ENCODE measurements at regions of chr11 and their contacts with region 1.

Region 1: DNA sequence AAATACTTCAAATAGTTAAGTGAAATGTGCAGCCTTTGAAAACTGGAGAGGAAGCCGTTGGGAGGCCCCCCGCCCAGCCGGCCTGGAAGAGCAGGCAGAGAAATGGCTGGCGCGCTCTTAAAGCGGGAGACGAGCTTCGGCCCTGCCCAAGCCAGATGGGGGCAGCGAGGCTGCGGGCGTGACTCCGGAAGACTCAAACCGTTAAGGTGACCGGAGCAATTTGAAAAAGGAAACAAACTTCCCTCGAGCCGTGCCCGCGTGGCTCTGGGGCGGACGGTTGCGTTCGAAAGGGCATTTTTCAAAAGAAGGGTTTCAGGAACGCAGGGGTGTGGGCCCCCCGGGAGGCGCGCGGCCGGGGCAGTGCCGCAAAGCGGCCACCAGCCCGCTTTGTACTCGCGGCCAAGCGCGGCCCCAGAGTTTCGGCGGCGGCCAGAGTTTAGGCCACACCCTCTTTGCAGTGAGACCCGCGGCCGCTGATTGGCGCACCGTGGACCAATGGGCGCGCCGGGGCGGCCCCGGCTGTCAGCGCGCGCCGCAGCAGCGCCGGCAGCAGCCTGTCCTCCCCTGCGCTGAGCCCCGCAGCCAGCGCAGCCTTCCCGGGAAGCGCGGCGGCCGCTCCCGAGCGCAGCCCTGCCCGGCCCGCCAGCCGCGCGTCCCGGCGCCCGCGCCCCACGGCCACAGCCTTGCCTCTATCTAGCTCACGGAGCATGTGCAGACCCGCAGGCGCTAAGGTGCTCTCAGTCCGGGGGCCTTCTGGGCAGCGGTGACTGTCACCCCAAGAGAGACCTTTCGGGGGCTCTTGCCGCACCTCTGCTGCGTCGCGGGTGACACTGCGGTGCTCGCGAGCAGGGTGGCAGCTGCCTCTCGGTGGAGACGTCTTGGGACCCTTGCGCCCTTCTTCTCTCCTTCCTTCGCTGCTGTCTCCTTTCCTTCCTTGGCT is at the start of gene NAV2:
- DNase-seq: peak; percentile 43 to 88 (median 68)
- ATAC-seq: peak; percentile 97
- H3K4me3 ChIP-seq: peak within 1 kb of the TSS; percentile 67 to 86
- H3K4me3 Mint-ChIP-seq: peak within 1 kb of the TSS; percentile 90
- H3K27ac ChIP-seq: peak within 1 kb of the TSS; percentile 43 to 61
- H3K27ac Mint-ChIP-seq: peak within 1 kb of the TSS; percentile 90
- H3K4me1 ChIP-seq: peaks cover 20% of the 10 kb centered on the region
- H3K4me1 Mint-ChIP-seq: peaks cover 26% of the 10 kb centered on the region
- H3K27me3 ChIP-seq: peaks cover 15 to 19% of the 10 kb centered on the region in 2 experiments
- H3K27me3 Mint-ChIP-seq: peaks cover 33% of the 10 kb centered on the region
- CTCF ChIP-seq: no peak
- total RNA-seq, gene NAV2: 0.39 to 1.3 TPM

Region 2: DNA sequence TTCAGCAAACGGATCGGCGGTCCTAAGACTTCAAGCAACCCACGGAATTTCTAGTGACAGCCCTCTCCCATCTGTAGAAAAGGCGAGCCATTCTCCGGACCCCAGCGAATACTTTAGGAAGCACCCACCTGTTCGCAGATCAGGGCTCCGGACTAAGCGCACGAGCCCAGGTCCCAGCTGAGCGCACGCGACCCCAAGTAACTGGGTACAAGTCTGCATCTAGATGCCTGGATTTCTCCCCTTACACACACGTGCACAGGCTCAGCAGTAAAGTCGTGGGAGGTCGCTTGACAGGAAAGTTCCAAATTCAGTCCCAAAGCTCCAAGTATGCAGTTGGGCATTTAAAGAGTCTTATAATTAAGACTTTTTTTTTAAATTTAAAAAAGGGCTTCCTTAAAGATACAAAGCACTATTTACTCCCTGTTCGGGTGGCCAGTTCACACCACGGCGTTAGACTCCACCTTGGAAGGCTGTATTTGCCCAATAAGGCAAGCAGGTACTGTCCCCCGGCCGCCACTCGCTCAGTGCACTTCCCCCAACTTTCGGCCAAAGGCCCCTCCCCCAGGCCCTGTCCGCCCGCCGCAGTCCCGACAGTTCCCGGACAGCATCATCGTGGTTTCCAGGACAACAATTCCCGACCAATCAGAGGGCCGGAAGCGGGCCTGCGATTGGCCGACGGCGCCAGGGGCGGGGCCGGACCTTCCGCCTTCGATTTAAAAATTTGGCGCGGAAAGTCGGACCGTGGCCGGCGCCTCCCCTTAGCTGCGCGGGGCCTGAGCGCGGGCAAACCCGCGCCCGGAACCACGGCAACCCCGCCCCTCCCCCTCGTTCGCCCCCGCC is 471.9 kb before region 1 on chr11 and contains the start of gene E2F8:
- CTCF ChIA-PET with region 1: no interaction called
- POLR2A ChIA-PET with region 1: no interaction called
- intact Hi-C with region 1: loop called in 1 of 2 experiments (anchors 10 kb)
- DNase-seq: peak; percentile 57 to 86 (median 74)
- ATAC-seq: peak; percentile 77
- H3K4me3 ChIP-seq: peak within 1 kb of the TSS; percentile 67 to 76
- H3K4me3 Mint-ChIP-seq: peak within 1 kb of the TSS; percentile 85
- H3K27ac ChIP-seq: no peak within 1 kb of the TSS
- H3K27ac Mint-ChIP-seq: no peak within 1 kb of the TSS
- H3K4me1 ChIP-seq: peaks cover 20% of the 10 kb centered on the region
- H3K4me1 Mint-ChIP-seq: peaks cover 18% of the 10 kb centered on the region
- H3K27me3 ChIP-seq: peaks cover 21 to 29% of the 10 kb centered on the region in 2 experiments
- H3K27me3 Mint-ChIP-seq: peaks cover 35% of the 10 kb centered on the region
- CTCF ChIP-seq: no peak
- total RNA-seq, gene E2F8: 0.19 TPM in 1 of 2 experiments, not detected in the other

Region 3: GRCh38 chr11:19723572-19724342 is 11.2 kb after region 1 on chr11:
- CTCF ChIA-PET with region 1: no interaction called
- POLR2A ChIA-PET with region 1: interaction called, 12 read pairs
- intact Hi-C with region 1: loop called in 1 of 2 experiments (anchors 1 kb)
- DNase-seq: peak in 8 of 9 experiments; percentile 17 to 81 (median 51)
- ATAC-seq: peak; percentile 87
- H3K4me3 ChIP-seq: no peak overlapping the region
- H3K4me3 Mint-ChIP-seq: peak overlapping the region; percentile 20
- H3K27ac ChIP-seq: peak overlapping the region; percentile 12 to 37
- H3K27ac Mint-ChIP-seq: peak overlapping the region; percentile 82
- H3K4me1 ChIP-seq: peaks cover 25% of the 10 kb centered on the region
- H3K4me1 Mint-ChIP-seq: peaks cover 26% of the 10 kb centered on the region
- H3K27me3 ChIP-seq: no peaks in the 10 kb centered on the region
- H3K27me3 Mint-ChIP-seq: peaks cover under 1% of the 10 kb centered on the region
- CTCF ChIP-seq: no peak

Region 4: GRCh38 chr11:19890308-19890707 is 177.8 kb after region 1 on chr11:
- CTCF ChIA-PET with region 1: no interaction called
- POLR2A ChIA-PET with region 1: no interaction called
- intact Hi-C with region 1: no loop called
- DNase-seq: no peak
- ATAC-seq: no peak
- H3K4me3 ChIP-seq: no peak overlapping the region
- H3K4me3 Mint-ChIP-seq: no peak overlapping the region
- H3K27ac ChIP-seq: no peak overlapping the region
- H3K27ac Mint-ChIP-seq: no peak overlapping the region
- H3K4me1 ChIP-seq: no peaks in the 10 kb centered on the region
- H3K4me1 Mint-ChIP-seq: no peaks in the 10 kb centered on the region
- H3K27me3 ChIP-seq: no peaks in the 10 kb centered on the region
- H3K27me3 Mint-ChIP-seq: peaks cover 6% of the 10 kb centered on the region
- CTCF ChIP-seq: no peak

Region 5: DNA sequence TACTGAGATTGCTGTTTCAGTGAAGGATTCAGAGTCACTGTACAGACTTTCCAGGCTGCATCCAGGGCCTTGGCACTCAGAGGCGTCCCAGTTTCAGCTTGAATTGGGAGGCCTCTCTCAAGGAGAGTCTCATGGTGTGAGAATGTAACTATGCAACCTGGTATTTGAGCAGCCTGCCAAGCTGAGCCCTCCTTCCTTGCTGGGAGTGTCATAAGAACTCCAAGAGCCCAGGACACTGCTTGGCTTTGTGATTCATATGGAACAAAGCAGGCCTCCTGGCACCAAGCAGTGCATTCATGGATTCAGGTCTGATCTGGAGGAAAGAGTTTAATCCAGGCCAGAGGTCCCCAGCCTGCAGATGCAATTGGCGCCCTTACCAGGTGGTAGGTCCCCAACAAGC is 276.0 kb after region 1 on chr11:
- CTCF ChIA-PET with region 1: no interaction called
- POLR2A ChIA-PET with region 1: no interaction called
- intact Hi-C with region 1: no loop called
- DNase-seq: no peak
- ATAC-seq: no peak
- H3K4me3 ChIP-seq: no peak overlapping the region
- H3K4me3 Mint-ChIP-seq: no peak overlapping the region
- H3K27ac ChIP-seq: no peak overlapping the region
- H3K27ac Mint-ChIP-seq: no peak overlapping the region
- H3K4me1 ChIP-seq: no peaks in the 10 kb centered on the region
- H3K4me1 Mint-ChIP-seq: no peaks in the 10 kb centered on the region
- H3K27me3 ChIP-seq: no peaks in the 10 kb centered on the region
- H3K27me3 Mint-ChIP-seq: peaks cover 2% of the 10 kb centered on the region
- CTCF ChIP-seq: no peak

Measured in CD8-positive, alpha-beta T cell (primary cell).